ENCODE measurements at regions of chr9 and their contacts with region 1.

Region 1: DNA sequence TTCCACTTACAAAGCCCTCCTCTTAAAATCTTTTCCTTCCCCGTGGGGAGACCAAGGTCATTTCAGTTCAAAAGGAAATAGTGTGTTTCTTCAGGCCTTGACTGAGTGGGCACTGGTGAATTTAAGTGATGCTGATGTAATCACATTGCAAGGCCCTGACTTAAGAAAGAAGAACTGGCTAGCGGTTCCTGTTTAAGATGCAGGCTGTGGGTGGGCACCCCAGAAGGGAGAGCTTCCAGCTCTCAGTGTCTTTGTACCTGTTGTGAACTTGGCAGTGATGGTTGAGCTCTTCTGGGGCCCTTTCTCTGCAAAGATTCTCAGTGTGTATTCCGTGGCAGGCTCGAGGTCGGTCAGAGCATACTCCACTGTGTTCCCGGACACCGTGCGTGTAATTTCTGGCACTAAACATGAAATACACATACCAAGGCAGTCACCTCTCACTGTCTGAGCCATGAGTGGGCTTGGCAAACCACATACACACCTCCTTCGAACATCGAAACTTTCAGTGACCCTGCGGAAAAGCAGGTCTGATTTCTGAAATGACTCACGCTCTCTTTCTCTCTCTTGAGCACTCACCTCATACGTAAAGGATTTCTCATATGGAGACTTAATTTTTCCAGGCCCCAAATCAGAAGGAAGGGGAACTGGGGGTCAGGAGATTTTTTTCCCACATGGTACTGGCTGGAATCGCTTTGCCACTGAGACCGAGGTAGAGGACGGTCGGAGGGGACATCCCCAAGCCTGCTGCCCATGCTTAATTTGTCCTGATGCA is 81.9 kb downstream of the TNC start:
- DNase-seq: no peak
- ATAC-seq: peak; percentile 23

Region 2: DNA sequence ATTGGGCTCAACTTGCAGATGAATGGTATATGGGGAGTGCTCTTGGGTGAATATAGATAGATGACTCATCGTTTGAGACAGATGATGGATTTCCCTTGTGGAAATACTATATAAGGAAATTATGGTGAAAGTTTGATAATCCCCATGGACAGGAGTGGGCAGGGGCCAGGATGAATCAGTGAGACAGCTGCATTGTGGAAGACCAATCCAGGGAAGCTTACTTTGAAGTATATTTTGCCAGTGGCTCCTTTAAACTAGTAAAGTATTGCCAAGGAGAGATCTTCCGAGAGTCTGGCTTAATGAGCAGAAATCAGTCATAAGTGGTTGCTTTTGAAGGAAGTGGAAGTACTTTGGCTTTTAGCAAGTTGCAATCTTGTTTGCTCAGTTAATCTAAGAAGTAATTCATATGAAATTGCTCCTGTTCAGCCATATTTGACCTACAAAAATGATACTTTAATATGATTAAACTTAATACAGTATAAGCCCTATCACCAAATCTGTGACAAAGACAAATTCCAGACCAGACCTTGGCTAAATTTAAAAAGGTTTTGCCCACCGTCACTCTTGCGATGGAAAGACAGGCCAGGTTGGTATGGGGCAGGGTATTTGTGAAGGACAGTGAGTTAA is 91.3 kb after region 1 on chr9:
- intact Hi-C with region 1: loop called in 1 of 2 experiments (anchors 10 kb)
- DNase-seq: no peak
- ATAC-seq: no peak

Region 3: DNA sequence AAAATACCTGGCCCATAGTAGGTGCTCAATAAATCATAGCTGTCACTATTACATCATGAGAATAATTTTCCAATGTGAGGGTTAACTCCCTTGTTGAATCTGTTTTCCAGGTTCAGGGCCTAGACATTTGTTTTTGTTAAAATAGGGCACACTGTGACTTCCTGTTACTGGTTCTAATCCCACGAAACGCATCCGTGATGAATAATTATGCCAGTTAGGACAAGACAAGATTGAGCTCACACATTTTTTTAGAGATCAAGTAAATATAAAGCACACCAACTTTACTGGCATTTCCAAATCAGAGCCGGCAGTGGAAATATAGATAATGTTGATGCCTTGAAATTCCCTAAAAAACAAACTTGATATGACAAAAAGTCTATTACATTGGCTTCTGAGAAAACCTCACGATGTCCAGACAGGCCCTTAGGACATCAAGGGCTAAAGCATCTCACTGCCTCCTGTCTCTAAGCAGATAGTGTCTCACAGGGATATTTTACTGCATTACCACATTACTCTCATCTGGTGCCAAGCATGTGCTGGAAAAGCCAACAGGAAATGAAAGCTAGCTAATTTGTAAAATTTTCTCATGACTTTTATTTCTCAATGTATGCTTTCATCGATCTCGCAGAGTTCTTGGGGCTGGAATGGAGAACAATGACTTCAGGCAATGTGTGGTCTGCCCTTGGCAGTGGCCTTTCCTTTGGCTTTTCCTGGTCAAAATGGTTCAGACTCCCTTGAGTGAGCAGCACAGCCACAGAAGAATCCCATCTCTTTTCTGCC is 703.3 kb after region 1 on chr9:
- intact Hi-C with region 1: no loop called
- DNase-seq: no peak
- ATAC-seq: no peak

Measured in left colon (tissue), 2 donors.